ENCODE measurements at regions of chr14 and their contacts with region 1.

Region 1: GRCh38 chr14:93655078-93655750 is 133.1 kb downstream of the PRIMA1 start:
- DNase-seq: peak; percentile 61
- H3K4me3 Mint-ChIP-seq: no peak overlapping the region
- H3K27ac Mint-ChIP-seq: no peak overlapping the region
- H3K4me1 Mint-ChIP-seq: no peaks in the 10 kb centered on the region
- H3K27me3 Mint-ChIP-seq: peaks cover 17% of the 10 kb centered on the region

Region 2: DNA sequence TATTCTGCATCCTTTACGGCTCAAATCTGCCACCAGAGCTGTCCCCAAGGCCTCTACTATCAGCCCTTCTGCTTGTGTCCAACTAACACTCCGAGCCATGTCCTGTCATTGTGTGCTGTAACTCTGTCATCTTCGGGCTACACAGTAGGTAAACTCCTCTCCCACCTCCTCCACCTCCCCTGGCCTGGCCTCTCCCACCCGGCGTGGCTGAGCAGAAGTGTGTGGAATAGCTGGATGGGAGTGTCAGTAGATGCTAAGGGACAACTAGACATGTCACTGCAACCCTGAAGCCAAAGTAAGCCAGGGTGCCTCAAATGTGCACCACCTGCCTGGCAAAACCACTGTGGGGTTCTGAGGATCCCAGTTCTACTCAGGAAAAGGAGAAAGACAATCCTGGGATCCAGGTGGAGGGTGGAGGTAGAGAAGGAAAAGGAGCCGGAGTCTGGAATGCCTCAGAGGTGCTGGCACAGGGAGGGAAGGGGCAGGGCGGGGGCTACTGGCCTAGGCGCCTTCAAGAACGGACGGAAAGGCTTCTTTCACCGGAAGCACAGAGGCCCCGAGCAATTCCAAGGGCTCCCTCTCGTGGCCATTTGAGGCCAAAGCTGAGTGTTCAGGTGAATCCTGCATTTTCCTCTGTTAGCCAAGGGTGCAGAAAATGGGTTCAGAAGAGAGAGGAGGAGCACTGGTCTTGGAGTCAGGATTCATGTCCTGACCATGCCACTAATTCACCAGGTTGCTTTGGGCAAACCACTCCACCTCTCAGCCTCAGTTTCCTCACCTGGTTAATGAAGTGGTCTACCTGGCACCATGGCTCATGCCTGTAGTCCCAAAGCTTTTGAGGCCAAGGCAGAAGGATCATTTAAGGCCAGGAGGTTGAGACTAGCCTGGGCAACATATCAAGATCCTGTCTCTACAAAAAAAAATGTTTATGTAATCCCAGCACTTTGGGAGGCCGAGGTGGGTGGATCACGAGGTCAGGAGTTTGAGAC is 251.4 kb after region 1 on chr14:
- intact Hi-C with region 1: loop called (anchors 5 kb)
- DNase-seq: peak; percentile 89
- H3K4me3 Mint-ChIP-seq: no peak overlapping the region
- H3K27ac Mint-ChIP-seq: peak overlapping the region; percentile 54
- H3K4me1 Mint-ChIP-seq: no peaks in the 10 kb centered on the region
- H3K27me3 Mint-ChIP-seq: peaks cover 15% of the 10 kb centered on the region